ENCODE measurements at regions of chr13 and their contacts with region 1.

Region 1: GRCh38 chr13:48600374-48601364 is 53.1 kb upstream of the CYSLTR2 start:
- DNase-seq: peak in 1 of 2 donors; percentile 60
- H3K4me3 ChIP-seq: no peak overlapping the region
- H3K27ac ChIP-seq: no peak overlapping the region
- H3K4me1 ChIP-seq: peaks cover 4 to 7% (median 6%) of the 10 kb centered on the region in 4 donors
- H3K27me3 ChIP-seq: no peaks in the 10 kb centered on the region
- CTCF ChIP-seq: no peak
- EP300 ChIP-seq: no peak
- POLR2A ChIP-seq: no peak

Region 2: GRCh38 chr13:48769107-48769704 is 168.5 kb after region 1 on chr13:
- intact Hi-C with region 1: loop called (anchors 10 kb)
- DNase-seq: peak; percentile 90 to 93
- H3K4me3 ChIP-seq: no peak overlapping the region
- H3K27ac ChIP-seq: no peak overlapping the region
- H3K4me1 ChIP-seq: no peaks in the 10 kb centered on the region
- H3K27me3 ChIP-seq: no peaks in the 10 kb centered on the region
- CTCF ChIP-seq: peak in 6 of 7 experiments; percentile 94 to 100 (median 97)
- EP300 ChIP-seq: no peak
- POLR2A ChIP-seq: no peak

Measured in stomach (tissue), 19 donors.